Activated CD8-positive, alpha-beta T cell treated with anti-CD3 and anti-CD28 coated beads, Interleukin-2, amount 10 ng/mL, durations not matched to agents 7 days and 5 days (primary cell): ENCODE measurements at regions of chr12 and their contacts with region 1.

Region 1: GRCh38 chr12:117836999-117837736 is 131.6 kb downstream of the KSR2 start:
- DNase-seq: peak; percentile 81
- ATAC-seq: peak; percentile 77
- H3K4me3 Mint-ChIP-seq: no peak overlapping the region
- H3K27ac Mint-ChIP-seq: no peak overlapping the region
- H3K4me1 Mint-ChIP-seq: no peaks in the 10 kb centered on the region
- H3K27me3 Mint-ChIP-seq: no peaks in the 10 kb centered on the region

Region 2: DNA sequence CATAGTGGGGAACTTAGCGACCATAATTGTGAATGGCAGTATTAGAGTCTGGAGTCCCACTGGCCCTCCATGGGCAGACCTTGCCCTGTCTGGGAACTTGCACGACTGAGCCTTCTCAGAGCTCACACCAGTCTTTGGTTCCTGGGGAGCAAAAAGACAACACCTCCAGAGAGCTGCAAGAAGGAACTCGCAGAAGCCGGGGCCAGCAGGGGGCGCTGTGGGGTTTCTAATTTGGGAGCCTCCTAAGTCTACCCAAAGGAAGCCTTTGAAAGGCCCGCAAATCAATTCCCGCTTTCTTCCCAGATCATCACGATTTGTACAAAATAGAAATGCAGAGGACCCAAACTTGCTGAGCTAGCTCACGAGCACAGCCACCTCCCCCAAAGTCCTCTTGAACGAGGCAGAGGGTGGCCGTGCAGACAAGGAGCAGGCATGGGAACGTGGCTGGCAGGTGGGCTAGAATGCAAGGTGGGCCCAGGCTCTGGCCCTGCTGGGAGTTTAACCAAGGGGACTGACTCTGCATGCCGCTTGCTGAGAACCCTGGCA is 600.6 kb before region 1 on chr12:
- CTCF ChIA-PET with region 1: interaction called, 17 read pairs
- POLR2A ChIA-PET with region 1: no interaction called
- DNase-seq: peak; percentile 87
- ATAC-seq: peak; percentile 81
- H3K4me3 Mint-ChIP-seq: no peak overlapping the region
- H3K27ac Mint-ChIP-seq: no peak overlapping the region
- H3K4me1 Mint-ChIP-seq: no peaks in the 10 kb centered on the region
- H3K27me3 Mint-ChIP-seq: peaks cover 2% of the 10 kb centered on the region

Region 3: DNA sequence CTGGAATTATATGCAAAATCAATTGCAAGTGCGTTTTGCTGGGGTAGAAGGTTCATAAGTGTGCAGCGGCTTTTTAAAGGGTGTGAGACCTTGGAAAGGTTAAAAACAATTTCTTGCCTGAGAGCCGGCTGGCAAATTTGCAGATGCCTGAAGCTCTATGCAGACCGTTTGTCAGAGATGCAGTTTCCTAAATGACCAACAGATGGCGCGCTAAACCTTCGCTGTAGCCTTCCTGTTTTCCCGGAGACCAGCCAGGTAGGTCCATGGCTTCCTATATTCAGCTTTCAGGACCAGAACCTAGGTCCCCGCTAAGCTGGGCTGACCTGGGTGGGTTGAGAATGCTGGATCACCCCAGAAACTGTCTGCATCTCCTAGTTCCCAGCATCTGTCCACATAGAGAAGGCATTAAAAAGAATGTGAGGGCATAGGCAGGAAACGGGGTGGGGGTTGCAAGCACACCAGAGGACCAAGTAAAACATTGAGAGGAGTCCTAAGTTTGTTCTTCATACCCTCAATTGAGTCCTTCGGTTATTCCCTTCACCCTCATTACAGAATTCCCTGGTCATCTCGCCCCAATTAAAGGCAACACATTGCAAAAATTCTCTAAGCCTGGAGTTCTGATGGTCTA is 470.0 kb before region 1 on chr12:
- CTCF ChIA-PET with region 1: interaction called, 30 read pairs
- POLR2A ChIA-PET with region 1: no interaction called
- DNase-seq: peak; percentile 73
- ATAC-seq: no peak
- H3K4me3 Mint-ChIP-seq: no peak overlapping the region
- H3K27ac Mint-ChIP-seq: no peak overlapping the region
- H3K4me1 Mint-ChIP-seq: no peaks in the 10 kb centered on the region
- H3K27me3 Mint-ChIP-seq: peaks cover 18% of the 10 kb centered on the region

Region 4: DNA sequence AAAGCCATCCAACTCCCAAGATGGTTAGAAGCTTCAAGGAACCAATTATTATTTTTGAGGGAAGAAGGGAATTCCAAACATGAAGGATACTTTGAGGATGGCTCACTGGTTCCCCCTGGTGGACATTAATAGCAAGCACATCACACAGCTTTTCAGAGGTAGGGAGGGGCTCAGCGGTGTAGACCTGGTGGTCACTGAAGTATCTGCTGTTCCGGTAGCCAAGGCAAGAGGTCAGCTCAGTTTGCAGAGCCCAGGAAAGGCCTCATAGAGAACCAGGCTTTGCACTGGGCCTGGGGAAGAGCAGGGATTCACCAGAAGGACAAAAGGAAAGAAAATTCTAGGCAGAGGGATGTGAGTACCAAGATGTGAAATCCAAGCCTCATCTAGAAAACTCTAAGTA is 12.9 kb after region 1 on chr12:
- CTCF ChIA-PET with region 1: interaction called, 27 read pairs
- POLR2A ChIA-PET with region 1: no interaction called
- DNase-seq: peak; percentile 25
- ATAC-seq: no peak
- H3K4me3 Mint-ChIP-seq: no peak overlapping the region
- H3K27ac Mint-ChIP-seq: no peak overlapping the region
- H3K4me1 Mint-ChIP-seq: no peaks in the 10 kb centered on the region
- H3K27me3 Mint-ChIP-seq: peaks cover 5% of the 10 kb centered on the region

Region 5: GRCh38 chr12:117857632-117858612 is 20.8 kb after region 1 on chr12:
- CTCF ChIA-PET with region 1: interaction called, 10 read pairs
- POLR2A ChIA-PET with region 1: no interaction called
- DNase-seq: peak; percentile 64
- ATAC-seq: peak; percentile 44
- H3K4me3 Mint-ChIP-seq: no peak overlapping the region
- H3K27ac Mint-ChIP-seq: no peak overlapping the region
- H3K4me1 Mint-ChIP-seq: no peaks in the 10 kb centered on the region
- H3K27me3 Mint-ChIP-seq: no peaks in the 10 kb centered on the region